HepG2 (cell line): ENCODE measurements at regions of chr2 and their contacts with region 1.

Region 1: GRCh38 chr2:99317166-99317872 is 16.3 kb upstream of the LYG1 start:
- DNase-seq: no peak
- ATAC-seq: peak; percentile 46
- H3K4me3 ChIP-seq: no peak overlapping the region
- H3K27ac ChIP-seq: no peak overlapping the region
- H3K4me1 ChIP-seq: no peaks in the 10 kb centered on the region
- H3K27me3 ChIP-seq: no peaks in the 10 kb centered on the region
- CTCF ChIP-seq: no peak
- EP300 ChIP-seq: no peak
- POLR2A ChIP-seq: no peak
- RAD21 ChIP-seq: no peak

Region 2: GRCh38 chr2:99297994-99298393 is 19.3 kb before region 1 on chr2:
- CTCF ChIA-PET with region 1: no interaction called
- POLR2A ChIA-PET with region 1: no interaction called
- in situ Hi-C with region 1: no loop called
- intact Hi-C with region 1: loop called (anchors 2 kb)
- DNase-seq: no peak
- ATAC-seq: no peak
- H3K4me3 ChIP-seq: no peak overlapping the region
- H3K27ac ChIP-seq: no peak overlapping the region
- H3K4me1 ChIP-seq: no peaks in the 10 kb centered on the region
- H3K27me3 ChIP-seq: no peaks in the 10 kb centered on the region
- CTCF ChIP-seq: no peak
- EP300 ChIP-seq: no peak
- POLR2A ChIP-seq: no peak
- RAD21 ChIP-seq: no peak

Region 3: DNA sequence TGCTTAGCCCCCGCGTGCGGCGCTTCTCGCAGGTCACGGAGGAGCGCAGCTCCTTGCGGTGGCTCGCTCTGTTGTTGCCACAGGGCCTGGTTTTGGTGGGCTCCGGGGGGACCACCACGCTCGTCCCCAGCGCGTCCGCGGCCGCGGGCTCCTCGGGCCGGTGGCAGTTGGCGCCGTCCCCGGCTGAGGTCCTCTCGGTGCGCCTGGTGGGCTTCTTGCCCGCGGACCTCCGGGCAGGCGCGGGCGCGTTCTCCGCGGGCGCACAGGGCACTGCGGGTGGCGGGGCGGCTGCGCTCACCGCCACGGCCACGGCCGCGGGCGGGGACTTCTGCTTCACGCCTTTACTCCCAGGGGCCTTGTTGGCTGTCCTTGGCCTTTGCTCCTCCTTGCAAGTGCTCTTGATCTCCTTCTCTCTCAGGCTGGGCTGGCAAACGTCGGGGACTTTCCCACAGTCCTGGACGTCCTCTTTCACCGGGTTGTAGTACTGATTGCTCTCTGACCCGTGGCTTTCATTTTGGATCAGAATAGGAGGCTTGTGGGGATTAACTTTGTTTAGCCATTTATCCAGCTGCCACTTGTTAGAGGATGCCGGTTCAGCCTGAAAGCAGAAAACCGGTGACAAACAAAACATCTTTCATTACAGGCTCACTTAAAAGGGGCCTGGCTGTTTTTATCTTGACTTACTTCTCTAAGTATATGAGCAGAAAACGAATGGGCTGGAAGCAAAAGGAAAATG is 276.5 kb after region 1 on chr2:
- CTCF ChIA-PET with region 1: no interaction called
- POLR2A ChIA-PET with region 1: no interaction called
- in situ Hi-C with region 1: no loop called
- intact Hi-C with region 1: no loop called
- DNase-seq: no peak
- ATAC-seq: no peak
- H3K4me3 ChIP-seq: no peak overlapping the region
- H3K27ac ChIP-seq: no peak overlapping the region
- H3K4me1 ChIP-seq: no peaks in the 10 kb centered on the region
- H3K27me3 ChIP-seq: peaks cover 0 to 14% of the 10 kb centered on the region in 2 experiments; a peak in 2 of 5 replicates
- CTCF ChIP-seq: no peak
- EP300 ChIP-seq: no peak
- POLR2A ChIP-seq: no peak
- RAD21 ChIP-seq: no peak